Natural killer cell (primary cell): ENCODE measurements at regions of chr2 and their contacts with region 1.

Region 1: DNA sequence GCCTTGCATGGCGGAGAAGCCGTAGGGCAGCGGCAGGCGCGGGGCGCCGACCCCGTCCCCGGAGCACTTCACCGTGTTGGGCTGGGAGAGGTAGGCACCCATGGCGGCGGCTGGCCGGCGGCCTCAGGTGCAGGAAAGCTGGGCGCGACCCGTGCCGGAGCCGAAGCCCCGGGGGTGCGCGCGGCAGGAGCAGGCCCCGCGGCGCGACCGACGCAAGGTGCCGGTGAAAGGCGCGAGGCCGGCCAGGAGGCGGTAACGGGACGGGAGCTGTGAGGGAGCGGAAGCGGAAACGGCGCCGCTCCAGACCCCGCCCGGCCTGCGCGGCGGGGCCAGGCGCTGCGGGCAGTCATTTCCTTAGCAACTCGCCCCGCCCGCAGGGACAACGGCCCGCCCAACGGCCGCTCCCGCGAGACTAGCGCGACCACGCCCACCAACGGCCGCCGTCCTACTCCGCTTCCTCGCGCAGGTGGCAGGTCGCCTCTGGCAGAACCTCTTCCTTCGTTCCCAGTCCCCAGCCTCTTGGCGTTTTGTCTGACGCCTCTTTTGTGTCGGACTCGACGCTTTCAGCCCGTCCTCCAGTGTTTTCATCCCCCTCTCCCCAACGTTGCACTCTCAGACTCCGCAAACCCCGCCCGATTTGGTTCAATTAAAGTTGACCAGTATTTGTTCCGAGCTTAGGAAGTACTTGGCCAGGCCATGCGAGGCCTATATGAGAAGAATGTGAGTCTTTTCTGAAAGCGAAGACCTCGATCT is at the start of gene PPM1G:
- DNase-seq: peak; percentile 97 to 98
- ATAC-seq: peak; percentile 95 to 100 (median 97)
- H3K4me3 ChIP-seq: peak within 1 kb of the TSS; percentile 91
- H3K4me3 Mint-ChIP-seq: peak within 1 kb of the TSS; percentile 90
- H3K27ac ChIP-seq: peak within 1 kb of the TSS; percentile 79
- H3K27ac Mint-ChIP-seq: peak within 1 kb of the TSS; percentile 92 to 93
- H3K4me1 ChIP-seq: peaks cover 27% of the 10 kb centered on the region
- H3K4me1 Mint-ChIP-seq: peaks cover 30 to 38% of the 10 kb centered on the region in 2 donors
- H3K27me3 ChIP-seq: no peaks in the 10 kb centered on the region
- H3K27me3 Mint-ChIP-seq: peaks cover 10 to 13% of the 10 kb centered on the region in 2 donors
- CTCF ChIP-seq: no peak
- total RNA-seq, gene PPM1G: 63.9 to 73.8 (median 69.5) TPM

Region 2: GRCh38 chr2:27390822-27391679 is 18.4 kb before region 1 on chr2:
- intact Hi-C with region 1: loop called (anchors 1 kb)
- DNase-seq: peak in 1 of 2 donors; percentile 75
- ATAC-seq: peak; percentile 82 to 89 (median 87)
- H3K4me3 ChIP-seq: no peak overlapping the region
- H3K4me3 Mint-ChIP-seq: peak overlapping the region; percentile 79
- H3K27ac ChIP-seq: peak overlapping the region; percentile 76
- H3K27ac Mint-ChIP-seq: peak overlapping the region; percentile 93 to 97
- H3K4me1 ChIP-seq: peaks cover 9% of the 10 kb centered on the region
- H3K4me1 Mint-ChIP-seq: peaks cover 15 to 25% of the 10 kb centered on the region in 2 donors
- H3K27me3 ChIP-seq: no peaks in the 10 kb centered on the region
- H3K27me3 Mint-ChIP-seq: no peaks in the 10 kb centered on the region
- CTCF ChIP-seq: no peak

Region 3: GRCh38 chr2:27428213-27428977 is 18.9 kb after region 1 on chr2 and contains the start of gene NRBP1:
- intact Hi-C with region 1: loop called (anchors 1 kb)
- DNase-seq: peak; percentile 94 to 95
- ATAC-seq: peak; percentile 84 to 97 (median 90)
- H3K4me3 ChIP-seq: peak within 1 kb of the TSS; percentile 69
- H3K4me3 Mint-ChIP-seq: peak within 1 kb of the TSS; percentile 95
- H3K27ac ChIP-seq: peak within 1 kb of the TSS; percentile 78
- H3K27ac Mint-ChIP-seq: peak within 1 kb of the TSS; percentile 94 to 97
- H3K4me1 ChIP-seq: peaks cover 28% of the 10 kb centered on the region
- H3K4me1 Mint-ChIP-seq: peaks cover 42 to 45% of the 10 kb centered on the region in 2 donors
- H3K27me3 ChIP-seq: no peaks in the 10 kb centered on the region
- H3K27me3 Mint-ChIP-seq: no peaks in the 10 kb centered on the region
- CTCF ChIP-seq: no peak
- total RNA-seq, gene NRBP1: 240 to 278 (median 262) TPM

Region 4: DNA sequence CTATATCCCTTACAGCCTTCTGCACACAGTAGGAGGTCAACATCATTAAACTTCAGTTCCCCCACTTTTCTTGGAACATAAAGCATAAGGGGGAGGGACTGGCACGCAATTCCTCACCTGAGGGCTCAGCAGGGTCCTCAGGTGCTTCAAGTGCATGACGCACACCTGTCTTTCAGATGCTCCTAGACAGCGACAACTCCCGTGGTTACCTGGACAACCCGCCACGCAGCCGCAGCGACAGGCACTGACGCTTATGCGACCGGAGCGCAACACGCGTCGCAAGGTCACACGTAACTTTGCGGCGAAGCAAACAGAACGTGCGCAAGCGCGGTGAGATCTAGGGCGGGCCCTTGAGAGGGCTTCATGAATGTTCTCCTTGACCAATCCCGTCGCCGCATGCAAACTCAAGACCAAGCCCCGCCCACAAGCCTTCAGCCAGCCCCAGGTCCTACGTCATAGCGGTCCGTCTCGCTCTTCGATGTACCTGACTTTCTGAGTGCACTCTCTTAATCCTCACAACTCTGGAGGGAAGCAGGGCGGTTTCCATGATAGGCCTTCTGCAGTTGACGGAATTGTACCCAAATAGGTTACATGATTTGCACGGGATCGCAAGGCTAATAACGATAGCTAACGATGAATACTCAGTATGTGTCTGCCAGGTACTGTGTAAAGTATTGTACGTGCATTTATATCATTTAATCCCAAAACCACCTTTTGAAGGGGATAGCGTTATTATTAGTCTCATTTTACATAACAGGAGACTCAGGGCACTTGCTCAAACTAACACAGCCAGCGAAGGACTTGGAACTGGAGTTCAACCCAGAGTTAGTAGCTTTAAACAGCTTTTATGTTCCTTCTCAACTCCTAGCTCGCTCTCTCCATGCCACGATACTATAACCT is 80.3 kb after region 1 on chr2 and contains the start of gene IFT172:
- intact Hi-C with region 1: loop called (anchors 2 kb)
- DNase-seq: peak; percentile 97 to 100
- ATAC-seq: peak; percentile 95 to 99 (median 96)
- H3K4me3 ChIP-seq: peak within 1 kb of the TSS; percentile 45
- H3K4me3 Mint-ChIP-seq: peak within 1 kb of the TSS; percentile 90
- H3K27ac ChIP-seq: peak within 1 kb of the TSS; percentile 77
- H3K27ac Mint-ChIP-seq: peak within 1 kb of the TSS; percentile 92
- H3K4me1 ChIP-seq: peaks cover 21% of the 10 kb centered on the region
- H3K4me1 Mint-ChIP-seq: peaks cover 14 to 20% of the 10 kb centered on the region in 2 donors
- H3K27me3 ChIP-seq: peaks cover 13% of the 10 kb centered on the region
- H3K27me3 Mint-ChIP-seq: peaks cover 12 to 21% of the 10 kb centered on the region in 2 donors
- CTCF ChIP-seq: no peak
- total RNA-seq, gene IFT172: 24.8 to 35.7 (median 30.7) TPM